BJ (cell line): ENCODE measurements at regions of chr4 and their contacts with region 1.

Region 1: GRCh38 chr4:83535520-83536361 is at the start of gene GPAT3:
- DNase-seq: no peak
- H3K4me3 ChIP-seq: peak within 1 kb of the TSS; percentile 49
- H3K27me3 ChIP-seq: peaks cover 10% of the 10 kb centered on the region
- CTCF ChIP-seq: no peak
- polyA plus RNA-seq, gene GPAT3: 0.37 and 0.58 TPM in 2 replicates

Region 2: DNA sequence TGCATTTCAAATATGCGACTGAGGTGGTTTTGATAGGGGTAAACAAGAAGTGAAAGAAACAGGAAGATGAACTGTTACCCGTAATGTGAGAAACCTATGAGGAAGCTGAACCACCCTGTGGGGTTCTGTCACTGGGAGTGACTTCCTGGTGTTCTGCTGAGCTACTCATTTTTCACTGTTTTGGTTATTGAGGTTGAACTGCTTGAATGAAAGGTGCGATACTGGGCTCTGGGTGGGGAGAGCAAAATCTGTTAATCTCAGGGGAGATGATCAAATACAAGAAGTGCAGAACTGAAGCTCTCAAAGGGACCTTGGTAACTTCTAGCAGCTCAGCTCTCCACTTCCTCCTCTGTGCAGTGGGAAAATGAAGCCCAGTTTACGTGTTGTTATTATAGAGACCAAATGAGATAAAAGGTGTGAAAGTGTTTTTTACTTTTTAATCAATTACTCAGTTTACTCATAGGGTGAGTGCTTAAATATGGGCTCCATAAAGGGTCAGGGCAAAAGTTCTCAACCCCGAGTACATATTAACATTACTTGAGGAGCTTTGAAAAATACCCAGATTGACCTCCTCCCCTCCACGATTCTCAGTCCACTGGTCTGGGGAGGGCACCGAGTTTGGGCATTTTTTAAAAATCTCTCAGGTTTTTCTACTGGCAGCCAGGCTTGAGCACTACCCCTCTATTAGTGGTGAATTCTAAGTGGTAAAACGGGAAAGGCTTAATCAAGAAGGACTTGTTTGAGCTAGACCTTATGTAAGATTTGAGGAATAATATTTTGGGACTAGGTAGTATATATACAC is 317.8 kb before region 1 on chr4:
- CTCF ChIA-PET with region 1: no interaction called
- POLR2A ChIA-PET with region 1: no interaction called
- DNase-seq: no peak
- H3K4me3 ChIP-seq: no peak overlapping the region
- H3K27me3 ChIP-seq: no peaks in the 10 kb centered on the region
- CTCF ChIP-seq: no peak

Region 3: GRCh38 chr4:83581411-83582288 is 45.9 kb after region 1 on chr4:
- CTCF ChIA-PET with region 1: no interaction called
- POLR2A ChIA-PET with region 1: interaction called, 10 read pairs
- DNase-seq: no peak
- H3K4me3 ChIP-seq: no peak overlapping the region
- H3K27me3 ChIP-seq: no peaks in the 10 kb centered on the region
- CTCF ChIP-seq: no peak

Region 4: DNA sequence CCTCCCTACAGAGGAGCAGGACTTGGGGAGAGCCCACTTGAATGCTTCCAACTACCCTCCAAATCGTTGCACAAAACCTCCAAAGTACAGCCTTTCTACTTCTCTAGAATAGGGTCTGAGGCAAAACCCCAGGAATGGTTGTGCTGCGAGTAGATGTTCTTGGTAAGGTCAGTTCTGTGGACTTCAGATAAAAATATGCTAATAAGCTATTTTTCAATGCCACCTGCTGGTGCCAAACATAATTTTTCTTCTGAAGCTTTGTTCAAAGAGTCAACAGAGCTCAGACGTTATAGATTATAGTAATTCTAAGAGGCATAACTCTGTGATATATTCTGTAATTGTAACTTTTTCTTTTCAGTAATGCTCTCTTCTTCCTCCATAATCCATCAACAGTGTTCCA is 425.8 kb after region 1 on chr4:
- CTCF ChIA-PET with region 1: no interaction called
- POLR2A ChIA-PET with region 1: no interaction called
- DNase-seq: no peak
- H3K4me3 ChIP-seq: no peak overlapping the region
- H3K27me3 ChIP-seq: no peaks in the 10 kb centered on the region
- CTCF ChIP-seq: peak; percentile 35; the same call in 1 of the 2 replicates